Vagina (tissue), 2 donors: ENCODE measurements at regions of chr2 and their contacts with region 1.

Region 1: GRCh38 chr2:178280244-178280852 is 86.0 kb downstream of the OSBPL6 start:
- DNase-seq: no peak
- H3K4me3 ChIP-seq: no peak overlapping the region
- H3K27ac ChIP-seq: no peak overlapping the region
- H3K4me1 ChIP-seq: no peaks in the 10 kb centered on the region
- H3K27me3 ChIP-seq: no peaks in the 10 kb centered on the region
- CTCF ChIP-seq: peak; percentile 44 to 62 (median 49)
- POLR2A ChIP-seq: no peak

Region 2: DNA sequence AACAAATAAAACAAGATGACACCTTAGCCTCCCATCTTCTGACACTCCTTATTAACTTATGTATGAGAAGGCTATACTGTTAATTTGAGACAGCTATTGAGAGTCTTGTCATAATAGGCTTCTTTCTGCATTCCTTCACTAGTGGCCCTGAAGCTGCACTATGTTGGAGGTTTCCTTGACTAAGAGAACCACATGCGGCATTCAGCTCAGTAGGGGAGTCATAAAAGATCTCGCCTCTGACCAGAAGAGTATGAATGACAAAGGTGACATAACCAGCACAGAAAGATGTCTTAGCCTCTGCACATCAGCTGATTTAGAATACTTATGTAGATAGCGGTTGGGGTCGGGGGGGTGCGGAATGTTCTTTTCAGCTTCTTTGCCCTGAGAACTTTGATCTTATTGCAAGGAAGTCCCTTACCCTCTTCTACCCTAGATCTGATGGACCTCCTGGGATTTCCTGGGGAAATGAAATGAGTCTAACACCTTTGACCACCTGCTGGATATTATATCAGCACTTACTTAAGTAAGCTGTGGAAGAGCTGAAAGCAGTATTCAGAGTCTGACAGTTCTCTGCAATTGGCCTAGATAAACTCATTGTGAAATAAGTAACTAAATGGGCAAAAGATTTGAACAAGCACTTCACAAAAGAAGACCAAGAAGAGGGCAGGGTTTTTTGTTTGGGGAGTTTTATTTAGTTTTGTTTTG is 143.9 kb before region 1 on chr2:
- intact Hi-C with region 1: loop called (anchors 10 kb)
- DNase-seq: no peak
- H3K4me3 ChIP-seq: no peak overlapping the region
- H3K27ac ChIP-seq: no peak overlapping the region
- H3K4me1 ChIP-seq: no peaks in the 10 kb centered on the region
- H3K27me3 ChIP-seq: no peaks in the 10 kb centered on the region
- CTCF ChIP-seq: no peak
- POLR2A ChIP-seq: no peak